PC-3 (cell line): ENCODE measurements at regions of chr17 and their contacts with region 1.

Region 1: GRCh38 chr17:8057691-8058114 is 18.8 kb downstream of the ALOX15B start:
- DNase-seq: peak; percentile 94
- ATAC-seq: peak; percentile 61
- H3K4me3 ChIP-seq: peak overlapping the region; percentile 64
- H3K27ac ChIP-seq: peak overlapping the region; percentile 97
- H3K4me1 ChIP-seq: peaks cover 39% of the 10 kb centered on the region
- H3K27me3 ChIP-seq: no peaks in the 10 kb centered on the region
- CTCF ChIP-seq: peak; percentile 72

Region 2: DNA sequence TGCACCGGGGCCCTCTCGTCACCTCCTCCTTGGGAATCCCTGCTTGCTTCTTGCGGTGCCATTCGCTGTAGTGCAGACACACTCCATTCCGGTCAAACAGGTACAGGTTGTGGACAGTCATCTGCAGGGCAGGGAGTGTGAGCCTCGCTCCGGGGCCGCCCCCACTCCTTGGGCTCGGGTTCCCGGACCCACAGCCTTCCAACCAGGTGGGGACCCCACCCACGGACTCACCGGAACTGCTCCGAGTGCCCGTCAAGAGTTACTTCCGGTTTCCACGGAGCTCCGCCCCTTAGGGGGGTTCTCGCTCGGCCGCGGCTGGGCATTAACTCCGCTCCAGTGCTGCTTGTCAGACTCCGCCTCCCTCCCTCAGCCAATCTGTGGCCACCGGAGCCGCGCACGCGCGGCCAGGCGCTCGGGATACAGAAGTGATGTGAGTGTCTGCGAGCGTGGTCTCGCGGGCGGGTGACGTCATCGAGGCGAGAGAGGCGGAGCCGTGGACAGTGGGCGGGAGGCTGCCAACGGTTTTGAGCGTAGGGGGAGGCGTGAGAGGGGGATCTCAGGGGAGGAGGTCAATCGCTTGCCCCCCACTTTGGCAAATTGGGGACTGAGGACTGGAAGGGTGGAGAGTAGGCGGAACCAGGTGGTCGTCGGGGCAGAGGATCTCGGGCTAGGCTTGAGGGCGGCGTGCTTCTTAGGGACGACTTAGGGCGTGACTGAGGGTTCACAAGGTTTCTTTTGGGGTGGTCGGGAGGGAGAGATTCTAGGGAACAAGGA is 125.8 kb before region 1 on chr17 and contains the starts of genes CNTROB and TRAPPC1:
- CTCF ChIA-PET with region 1: interaction called, 5 read pairs
- POLR2A ChIA-PET with region 1: no interaction called
- intact Hi-C with region 1: loop called (anchors 5 kb)
- DNase-seq: peak; percentile 96
- ATAC-seq: peak; percentile 95
- H3K4me3 ChIP-seq: peak within 1 kb of the TSS; percentile 98
- H3K27ac ChIP-seq: peak within 1 kb of the TSS; percentile 44
- H3K4me1 ChIP-seq: peaks cover 21% of the 10 kb centered on the region
- H3K27me3 ChIP-seq: no peaks in the 10 kb centered on the region
- CTCF ChIP-seq: no peak
- total RNA-seq, gene CNTROB: 27.5 and 40.5 TPM in 2 replicates
- total RNA-seq, gene TRAPPC1: 26.4 and 30.5 TPM in 2 replicates

Region 3: GRCh38 chr17:8005960-8006730 is 51.6 kb before region 1 on chr17:
- CTCF ChIA-PET with region 1: no interaction called
- POLR2A ChIA-PET with region 1: no interaction called
- intact Hi-C with region 1: no loop called
- DNase-seq: no peak
- ATAC-seq: no peak
- H3K4me3 ChIP-seq: no peak overlapping the region
- H3K27ac ChIP-seq: no peak overlapping the region
- H3K4me1 ChIP-seq: no peaks in the 10 kb centered on the region
- H3K27me3 ChIP-seq: no peaks in the 10 kb centered on the region
- CTCF ChIP-seq: no peak

Region 4: DNA sequence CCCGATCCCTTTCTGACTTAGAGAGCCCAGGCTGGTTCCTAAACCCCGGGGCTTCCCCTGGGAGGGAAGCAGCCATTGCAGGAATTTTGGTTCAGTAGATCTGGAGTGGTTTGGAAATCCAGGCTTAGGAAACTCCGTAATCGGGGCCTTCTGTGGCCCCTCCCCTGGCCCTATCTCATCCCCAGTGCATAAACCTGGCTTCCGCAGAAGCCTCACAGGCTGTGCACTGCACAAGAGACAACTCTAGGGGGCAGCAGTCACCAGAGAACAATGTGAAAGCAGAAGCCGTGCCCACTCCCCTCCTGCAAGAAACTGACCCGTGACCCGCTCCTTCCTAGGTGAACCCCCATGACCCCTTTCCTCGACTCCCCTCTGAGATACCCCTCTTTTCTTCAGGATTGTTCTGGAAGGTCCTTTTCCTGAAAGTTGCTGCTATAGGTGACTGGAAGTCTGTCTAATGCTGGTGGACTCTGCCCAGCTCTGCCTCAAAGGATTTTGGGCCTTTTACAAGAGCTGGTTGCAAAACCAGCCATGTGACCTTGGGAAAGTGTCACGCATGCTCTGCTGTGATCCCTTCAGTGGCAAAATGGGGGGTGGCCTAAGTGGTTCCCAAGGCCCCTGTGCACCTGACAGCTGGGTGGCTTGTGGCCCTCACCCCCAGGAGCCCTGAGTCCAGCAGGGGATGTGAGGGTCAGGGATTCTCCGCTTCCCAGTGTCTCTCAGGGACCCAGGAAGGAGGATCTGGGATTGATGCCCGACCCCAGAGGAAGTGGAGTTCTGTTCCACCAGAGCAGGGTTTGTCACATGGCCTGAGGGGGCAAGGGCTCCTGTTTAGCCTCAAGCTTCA is 40.8 kb before region 1 on chr17:
- CTCF ChIA-PET with region 1: interaction called, 12 read pairs
- POLR2A ChIA-PET with region 1: no interaction called
- intact Hi-C with region 1: loop called (anchors 1 kb)
- DNase-seq: peak; percentile 65
- ATAC-seq: peak; percentile 63
- H3K4me3 ChIP-seq: peak overlapping the region; percentile 63
- H3K27ac ChIP-seq: peak overlapping the region; percentile 37
- H3K4me1 ChIP-seq: peaks cover 28% of the 10 kb centered on the region
- H3K27me3 ChIP-seq: no peaks in the 10 kb centered on the region
- CTCF ChIP-seq: peak; percentile 82

Region 5: DNA sequence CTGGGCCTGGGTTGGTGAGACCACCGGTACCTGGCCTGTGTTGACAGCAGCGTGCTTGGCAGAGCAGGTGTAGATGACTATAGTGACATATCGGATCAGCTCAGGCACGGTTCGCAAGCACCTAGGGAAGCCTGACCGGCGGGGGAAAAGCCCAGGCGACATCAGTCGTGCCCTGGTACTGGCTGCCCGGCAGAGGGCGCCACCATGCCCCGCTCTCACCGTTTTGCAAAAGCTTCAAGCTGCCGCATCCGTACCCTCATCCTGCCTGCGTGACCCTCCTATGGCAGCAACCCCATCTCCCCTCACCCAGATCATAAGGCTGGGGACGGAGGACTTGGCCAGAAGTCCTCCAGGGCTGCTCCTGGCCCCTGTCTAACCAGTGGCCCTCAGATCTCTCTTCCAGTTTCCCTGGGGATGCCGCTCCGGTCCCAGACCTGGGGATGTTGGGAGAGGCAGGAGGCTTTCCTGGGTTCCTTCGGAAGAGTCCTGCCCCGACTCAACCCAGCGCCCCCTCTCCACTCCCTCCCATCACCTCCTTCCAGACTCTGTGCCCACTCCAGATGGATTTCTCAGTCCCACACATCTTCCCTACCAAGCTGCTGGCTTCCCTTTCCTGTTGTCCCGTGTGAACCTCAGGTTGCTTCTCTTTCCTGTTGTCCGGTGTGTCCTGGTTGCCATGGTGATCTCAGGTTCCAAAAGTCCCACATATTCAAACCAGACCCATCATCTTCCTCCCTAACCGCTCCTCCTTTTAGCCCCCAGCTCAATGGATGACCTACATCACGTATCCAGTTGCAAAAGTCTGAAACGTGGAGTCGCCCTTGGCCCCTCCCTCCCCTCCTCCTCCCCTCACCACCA is 16.2 kb after region 1 on chr17:
- CTCF ChIA-PET with region 1: interaction called, 12 read pairs
- POLR2A ChIA-PET with region 1: no interaction called
- intact Hi-C with region 1: no loop called
- DNase-seq: peak; percentile 60
- ATAC-seq: peak; percentile 84
- H3K4me3 ChIP-seq: peak overlapping the region; percentile 57
- H3K27ac ChIP-seq: no peak overlapping the region
- H3K4me1 ChIP-seq: peaks cover 4% of the 10 kb centered on the region; the same call in 1 of the 2 replicates
- H3K27me3 ChIP-seq: peaks cover 30% of the 10 kb centered on the region
- CTCF ChIP-seq: peak; percentile 82